K562 (cell line): ENCODE measurements at regions of chr3 and their contacts with region 1.

Region 1: GRCh38 chr3:101809178-101810021 is 30.4 kb downstream of the NXPE3 start:
- DNase-seq: peak; percentile 21 to 44 (median 32)
- ATAC-seq: peak; percentile 61; the same call in 2 of the 3 replicates
- H3K4me3 ChIP-seq: no peak overlapping the region
- H3K27ac ChIP-seq: no peak overlapping the region
- H3K4me1 ChIP-seq: no peaks in the 10 kb centered on the region
- H3K27me3 ChIP-seq: no peaks in the 10 kb centered on the region
- CTCF ChIP-seq: peak; percentile 34 to 68 (median 54); a peak in 5 of 6 replicates
- EP300 ChIP-seq: no peak
- POLR2A ChIP-seq: no peak
- RAD21 ChIP-seq: peak; percentile 78 to 80

Region 2: DNA sequence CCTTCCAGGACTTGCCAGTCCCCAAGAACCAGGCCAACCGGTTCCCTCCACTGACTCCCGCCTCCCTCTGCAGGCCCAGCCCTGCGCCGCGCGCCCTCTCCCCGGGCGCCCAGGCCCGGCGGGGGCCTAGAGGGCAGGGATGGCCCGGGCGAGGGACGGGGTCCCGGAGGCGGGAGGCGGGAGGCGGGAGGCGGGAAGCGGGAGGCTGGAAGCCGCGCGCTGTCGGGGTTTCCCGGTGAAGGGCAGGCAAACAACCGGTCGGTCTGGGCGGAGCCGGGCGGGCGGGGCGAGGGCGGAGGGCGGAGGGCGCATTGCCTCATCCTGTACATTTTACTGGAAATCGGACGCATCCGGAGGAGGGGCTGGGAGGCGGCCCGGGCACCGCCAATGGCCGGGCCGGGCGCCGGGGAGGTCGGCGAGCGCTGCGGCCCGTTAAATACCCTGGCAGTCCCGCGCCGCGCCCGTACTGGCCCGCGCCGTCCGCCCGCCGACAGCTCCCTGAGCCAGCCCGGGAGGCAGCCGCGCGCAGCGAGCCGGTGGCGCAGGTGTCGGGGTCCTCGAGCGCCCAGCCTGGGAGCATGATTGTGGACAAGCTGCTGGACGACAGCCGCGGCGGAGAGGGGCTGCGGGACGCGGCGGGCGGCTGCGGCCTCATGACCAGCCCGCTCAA is 39.8 kb after region 1 on chr3 and contains the start of gene NFKBIZ:
- CTCF ChIA-PET with region 1: no interaction called
- POLR2A ChIA-PET with region 1: no interaction called
- in situ Hi-C with region 1: no loop called
- intact Hi-C with region 1: loop called (anchors 2 kb)
- DNase-seq: peak; percentile 82 to 91 (median 86)
- ATAC-seq: peak; percentile 93
- H3K4me3 ChIP-seq: peak within 1 kb of the TSS; percentile 86
- H3K27ac ChIP-seq: peak within 1 kb of the TSS; percentile 81
- H3K4me1 ChIP-seq: peaks cover 8 to 10% of the 10 kb centered on the region in 2 experiments; a peak in 3 of 5 replicates
- H3K27me3 ChIP-seq: no peaks in the 10 kb centered on the region
- CTCF ChIP-seq: no peak
- EP300 ChIP-seq: no peak
- POLR2A ChIP-seq: peak; percentile 68; the same call in 1 of the 2 replicates
- RAD21 ChIP-seq: no peak
- polyA plus RNA-seq, gene NFKBIZ: 1.2 to 1.6 TPM

Region 3: GRCh38 chr3:101963902-101964362 is 154.5 kb after region 1 on chr3:
- CTCF ChIA-PET with region 1: no interaction called
- POLR2A ChIA-PET with region 1: no interaction called
- in situ Hi-C with region 1: no loop called
- intact Hi-C with region 1: loop called (anchors 10 kb)
- DNase-seq: no peak
- ATAC-seq: no peak
- H3K4me3 ChIP-seq: no peak overlapping the region
- H3K27ac ChIP-seq: no peak overlapping the region
- H3K4me1 ChIP-seq: no peaks in the 10 kb centered on the region
- H3K27me3 ChIP-seq: no peaks in the 10 kb centered on the region
- CTCF ChIP-seq: no peak
- EP300 ChIP-seq: no peak
- POLR2A ChIP-seq: no peak
- RAD21 ChIP-seq: no peak

Region 4: DNA sequence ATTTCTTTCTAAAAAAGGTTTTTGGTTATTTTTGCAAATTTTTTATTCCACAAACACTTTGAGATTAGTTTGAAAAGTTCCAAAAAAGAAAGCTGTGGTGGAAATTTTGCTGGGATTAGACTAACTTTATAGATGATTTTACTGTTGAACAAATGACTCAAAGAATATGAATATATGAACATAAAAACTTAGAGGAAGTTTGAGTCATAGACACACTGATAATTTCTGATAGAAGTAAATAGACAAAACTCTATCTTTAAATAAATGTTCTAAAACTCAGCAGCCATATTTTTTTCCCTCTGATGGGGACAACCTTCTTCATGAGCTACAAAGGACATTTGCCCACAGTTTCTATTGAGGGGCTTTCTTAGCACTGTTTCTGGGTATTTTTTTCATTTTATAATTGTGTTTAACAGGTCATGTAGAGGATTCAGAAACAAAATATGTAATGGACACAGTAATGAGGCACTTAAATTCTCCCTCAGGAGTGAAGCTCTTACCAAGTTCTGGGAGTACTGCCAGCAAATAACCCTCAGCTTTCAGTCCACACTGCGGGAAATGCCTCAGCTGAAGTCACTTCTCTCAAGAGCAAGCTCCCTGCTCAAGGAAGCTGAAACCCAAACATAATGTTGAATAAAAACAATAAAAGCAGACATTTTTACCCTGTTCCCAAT is 197.5 kb after region 1 on chr3:
- CTCF ChIA-PET with region 1: no interaction called
- POLR2A ChIA-PET with region 1: no interaction called
- in situ Hi-C with region 1: no loop called
- intact Hi-C with region 1: no loop called
- DNase-seq: no peak
- ATAC-seq: no peak
- H3K4me3 ChIP-seq: no peak overlapping the region
- H3K27ac ChIP-seq: no peak overlapping the region
- H3K4me1 ChIP-seq: no peaks in the 10 kb centered on the region
- H3K27me3 ChIP-seq: no peaks in the 10 kb centered on the region
- CTCF ChIP-seq: no peak
- EP300 ChIP-seq: no peak
- POLR2A ChIP-seq: no peak
- RAD21 ChIP-seq: no peak

Region 5: DNA sequence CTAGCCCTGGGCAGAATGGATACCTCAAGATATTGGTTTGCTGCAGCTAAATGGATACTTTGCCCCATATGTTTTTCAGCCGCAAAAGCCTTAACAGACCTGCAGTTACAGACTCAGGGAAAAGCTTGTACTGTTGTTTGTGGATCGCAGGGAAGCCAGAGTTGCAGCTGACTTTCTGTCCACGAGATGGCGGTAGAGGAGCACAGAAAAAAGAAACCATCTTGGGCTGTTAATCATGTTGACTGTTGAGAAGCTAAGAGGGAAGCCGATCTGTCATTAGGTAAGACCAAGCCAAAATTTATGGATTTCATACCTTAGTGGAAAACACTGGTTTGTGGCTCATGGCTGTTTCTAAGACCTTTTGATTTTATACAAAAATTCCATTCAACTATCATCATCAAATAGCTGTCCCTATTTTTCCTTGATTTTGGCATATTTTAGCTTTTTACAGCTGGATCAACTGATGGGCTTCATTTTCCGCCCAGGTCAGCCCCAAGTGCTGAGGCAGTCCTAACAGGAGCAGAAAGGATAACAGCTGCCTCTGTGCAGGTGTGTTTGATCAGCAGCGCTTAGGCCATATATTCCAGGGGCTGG is 419.8 kb after region 1 on chr3:
- CTCF ChIA-PET with region 1: interaction called, 25 read pairs
- POLR2A ChIA-PET with region 1: no interaction called
- in situ Hi-C with region 1: loop called (anchors 5 kb)
- intact Hi-C with region 1: loop called (anchors 1 kb)
- DNase-seq: peak; percentile 21 to 68 (median 40)
- ATAC-seq: peak; percentile 85
- H3K4me3 ChIP-seq: no peak overlapping the region
- H3K27ac ChIP-seq: no peak overlapping the region
- H3K4me1 ChIP-seq: no peaks in the 10 kb centered on the region; a peak in 1 of 5 replicates
- H3K27me3 ChIP-seq: no peaks in the 10 kb centered on the region
- CTCF ChIP-seq: peak; percentile 64 to 82 (median 77)
- EP300 ChIP-seq: no peak
- POLR2A ChIP-seq: no peak
- RAD21 ChIP-seq: peak; percentile 88